Gastrocnemius medialis (tissue), 4 donors: ENCODE measurements at regions of chr1 and their contacts with region 1.

Region 1: DNA sequence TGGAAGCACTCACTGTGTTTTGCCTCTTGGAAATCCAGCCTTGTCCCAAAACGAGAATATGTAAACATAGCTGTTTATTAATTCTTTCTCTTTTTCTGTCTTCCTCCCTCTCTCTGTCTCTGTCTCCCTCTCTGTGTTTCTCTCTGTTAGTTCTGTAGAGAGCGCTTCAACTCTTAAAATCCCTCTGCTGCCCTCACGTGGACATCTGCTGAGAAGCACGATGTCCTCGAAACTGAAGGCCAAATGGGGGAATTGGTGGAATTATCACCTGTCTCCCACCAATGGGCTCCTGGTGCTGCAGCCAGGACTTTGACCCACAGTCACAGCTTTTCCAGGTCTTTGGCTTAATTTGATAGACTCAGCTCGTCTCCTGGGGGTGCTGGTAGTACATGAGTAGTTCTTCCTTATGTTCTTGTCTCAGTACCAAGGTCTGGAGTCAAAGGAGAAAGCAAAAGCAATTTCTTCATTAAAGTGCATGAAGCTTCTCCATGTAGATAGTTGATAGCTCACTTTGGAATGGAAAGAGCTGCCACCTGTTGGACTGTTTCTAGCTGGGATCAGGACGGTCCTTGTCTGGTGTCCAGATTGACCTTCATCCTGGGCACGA is 5.5 kb upstream of the GBP6 start:
- DNase-seq: peak; percentile 35 to 52
- ATAC-seq: peak; percentile 89 to 93
- H3K4me3 ChIP-seq: no peak overlapping the region
- H3K27ac ChIP-seq: peak overlapping the region in 1 of 4 donors; percentile 41
- H3K4me1 ChIP-seq: no peaks in the 10 kb centered on the region
- H3K27me3 ChIP-seq: no peaks in the 10 kb centered on the region
- CTCF ChIP-seq: peak; percentile 58 to 75 (median 66)
- POLR2A ChIP-seq: no peak

Region 2: DNA sequence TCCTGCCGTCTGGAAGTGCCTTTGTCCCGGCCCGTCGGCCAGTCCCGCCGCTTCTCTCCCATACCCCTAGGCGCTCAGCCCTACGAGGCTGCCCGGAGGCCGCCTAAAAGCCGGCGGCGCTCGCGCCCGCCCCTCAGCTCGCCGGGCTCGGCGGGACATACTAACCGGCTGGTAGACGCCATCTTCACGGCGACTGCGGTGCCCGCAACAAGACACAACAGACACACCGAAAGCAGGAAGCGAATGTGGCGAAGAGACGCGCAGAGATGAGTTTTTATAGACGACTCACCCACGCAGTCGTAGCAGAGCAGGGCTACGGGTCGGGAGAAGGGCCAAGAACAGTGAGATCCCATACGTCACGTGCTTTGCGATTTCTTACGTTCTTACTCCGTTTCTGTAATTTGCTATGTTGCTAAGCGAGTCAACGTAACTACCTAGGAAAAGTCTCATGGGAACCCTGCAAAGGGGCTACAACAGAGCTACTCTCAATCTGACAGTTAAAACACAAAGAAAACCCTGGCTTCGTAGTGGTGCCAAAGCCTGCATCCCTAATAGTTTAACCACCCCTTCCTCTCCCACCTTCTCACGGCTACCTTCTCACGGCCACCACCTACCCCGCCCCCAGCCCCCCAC is 467.0 kb before region 1 on chr1 and contains the start of gene GTF2B:
- in situ Hi-C with region 1: no loop called
- intact Hi-C with region 1: no loop called
- DNase-seq: peak; percentile 91 to 92
- ATAC-seq: peak; percentile 91 to 94
- H3K4me3 ChIP-seq: peak within 1 kb of the TSS; percentile 95 to 100 (median 98)
- H3K27ac ChIP-seq: peak within 1 kb of the TSS; percentile 92 to 99 (median 97)
- H3K4me1 ChIP-seq: peaks cover 23 to 28% of the 10 kb centered on the region in 2 donors
- H3K27me3 ChIP-seq: no peaks in the 10 kb centered on the region
- CTCF ChIP-seq: no peak
- POLR2A ChIP-seq: peak; percentile 86 to 87
- total RNA-seq, gene GTF2B: 20.2 to 30.3 (median 24.7) TPM

Region 3: GRCh38 chr1:88998716-88999115 is 359.7 kb before region 1 on chr1:
- in situ Hi-C with region 1: loop called in 3 of 4 experiments (anchors 5 to 10 kb)
- intact Hi-C with region 1: loop called (anchors 1 kb)
- DNase-seq: no peak
- ATAC-seq: peak; percentile 86 to 91
- H3K4me3 ChIP-seq: no peak overlapping the region
- H3K27ac ChIP-seq: no peak overlapping the region
- H3K4me1 ChIP-seq: no peaks in the 10 kb centered on the region
- H3K27me3 ChIP-seq: no peaks in the 10 kb centered on the region
- CTCF ChIP-seq: peak; percentile 40 to 66 (median 62)
- POLR2A ChIP-seq: no peak

Region 4: DNA sequence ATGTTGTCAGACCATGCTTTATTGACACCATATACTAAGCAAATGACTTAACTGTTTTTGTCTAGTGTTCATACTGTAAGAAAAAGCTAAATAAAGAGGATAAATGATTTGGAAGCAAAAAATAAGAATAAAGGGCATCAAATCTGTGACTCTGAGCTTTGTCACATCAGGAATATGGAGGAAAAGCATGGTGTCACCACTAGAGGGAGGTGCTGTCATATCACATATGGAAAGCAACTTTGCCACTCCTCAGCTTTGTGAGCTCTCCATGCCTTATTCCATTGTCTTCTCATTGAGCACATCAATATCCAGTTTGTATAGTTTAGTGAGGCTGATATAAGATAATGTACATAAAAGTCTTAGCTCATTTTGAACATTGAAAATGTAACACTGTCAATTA is 272.6 kb before region 1 on chr1:
- in situ Hi-C with region 1: loop called in 1 of 4 experiments (anchors 10 kb)
- intact Hi-C with region 1: no loop called
- DNase-seq: no peak
- ATAC-seq: peak in 1 of 2 donors; percentile 64
- H3K4me3 ChIP-seq: no peak overlapping the region
- H3K27ac ChIP-seq: no peak overlapping the region
- H3K4me1 ChIP-seq: no peaks in the 10 kb centered on the region
- H3K27me3 ChIP-seq: no peaks in the 10 kb centered on the region
- CTCF ChIP-seq: peak in 4 of 5 experiments; percentile 32 to 67 (median 36)
- POLR2A ChIP-seq: no peak

Region 5: DNA sequence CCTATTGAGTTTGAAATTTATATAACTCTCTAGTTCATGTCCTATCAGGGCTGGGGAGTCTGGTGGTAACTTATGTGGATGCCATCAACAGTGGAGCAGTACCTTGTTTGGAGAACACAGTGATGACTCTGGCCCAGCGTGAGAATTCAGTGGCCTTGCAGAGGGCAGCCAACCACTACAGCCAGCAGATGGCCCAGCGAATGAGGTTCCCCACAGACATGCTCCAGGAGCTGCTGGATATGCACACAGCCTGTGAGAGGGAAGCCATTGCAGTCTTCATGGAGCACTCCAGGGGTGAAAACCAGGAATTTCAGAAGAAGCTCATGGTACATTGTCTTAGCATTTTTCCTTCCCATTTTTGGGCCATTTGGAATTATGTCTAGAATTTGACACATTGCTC is 26.5 kb before region 1 on chr1:
- in situ Hi-C with region 1: no loop called
- intact Hi-C with region 1: no loop called
- DNase-seq: no peak
- ATAC-seq: no peak
- H3K4me3 ChIP-seq: no peak overlapping the region
- H3K27ac ChIP-seq: no peak overlapping the region
- H3K4me1 ChIP-seq: no peaks in the 10 kb centered on the region
- H3K27me3 ChIP-seq: no peaks in the 10 kb centered on the region
- CTCF ChIP-seq: no peak
- POLR2A ChIP-seq: no peak

Region 6: GRCh38 chr1:89394851-89395250 is 36.5 kb after region 1 on chr1:
- in situ Hi-C with region 1: no loop called
- intact Hi-C with region 1: no loop called
- DNase-seq: no peak
- ATAC-seq: no peak
- H3K4me3 ChIP-seq: no peak overlapping the region
- H3K27ac ChIP-seq: no peak overlapping the region
- H3K4me1 ChIP-seq: no peaks in the 10 kb centered on the region
- H3K27me3 ChIP-seq: no peaks in the 10 kb centered on the region
- CTCF ChIP-seq: no peak
- POLR2A ChIP-seq: no peak

Region 7: DNA sequence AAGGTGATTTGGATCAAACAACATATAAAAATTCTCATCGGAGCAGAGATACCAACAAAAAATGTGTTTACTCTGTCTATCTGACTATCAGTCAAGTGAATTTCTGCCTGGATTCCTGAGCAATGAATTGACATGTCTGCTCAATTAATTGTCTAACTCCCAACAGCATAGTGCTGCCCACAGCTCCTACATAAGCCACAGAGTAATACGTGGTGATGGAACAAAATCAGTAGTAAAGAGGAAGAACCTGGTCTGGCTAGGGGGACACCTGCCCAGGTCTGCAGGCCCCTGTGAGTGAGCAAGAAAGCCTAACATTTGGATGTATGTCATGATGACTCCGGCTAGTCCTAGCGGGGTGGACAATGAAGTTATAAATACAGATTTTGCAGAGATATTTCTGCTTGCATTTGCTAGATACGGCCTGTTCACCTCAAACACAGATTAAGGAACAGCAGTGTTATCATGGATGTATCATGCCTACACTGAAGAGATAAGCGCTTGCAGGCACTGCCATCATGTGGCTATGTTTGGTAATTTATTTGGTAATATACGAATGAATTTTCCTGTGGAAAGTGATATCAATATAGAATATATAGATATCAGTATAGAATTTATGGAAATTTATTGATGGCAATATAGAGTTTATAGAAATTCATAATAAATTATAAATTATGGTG is 96.6 kb after region 1 on chr1:
- in situ Hi-C with region 1: no loop called
- intact Hi-C with region 1: loop called (anchors 5 kb)
- DNase-seq: no peak
- ATAC-seq: peak in 1 of 2 donors; percentile 30
- H3K4me3 ChIP-seq: no peak overlapping the region
- H3K27ac ChIP-seq: no peak overlapping the region
- H3K4me1 ChIP-seq: no peaks in the 10 kb centered on the region
- H3K27me3 ChIP-seq: no peaks in the 10 kb centered on the region
- CTCF ChIP-seq: peak; percentile 33 to 61 (median 49)
- POLR2A ChIP-seq: no peak